Tibial artery (tissue), 4 donors: ENCODE measurements at regions of chr2 and their contacts with region 1.

Region 1: DNA sequence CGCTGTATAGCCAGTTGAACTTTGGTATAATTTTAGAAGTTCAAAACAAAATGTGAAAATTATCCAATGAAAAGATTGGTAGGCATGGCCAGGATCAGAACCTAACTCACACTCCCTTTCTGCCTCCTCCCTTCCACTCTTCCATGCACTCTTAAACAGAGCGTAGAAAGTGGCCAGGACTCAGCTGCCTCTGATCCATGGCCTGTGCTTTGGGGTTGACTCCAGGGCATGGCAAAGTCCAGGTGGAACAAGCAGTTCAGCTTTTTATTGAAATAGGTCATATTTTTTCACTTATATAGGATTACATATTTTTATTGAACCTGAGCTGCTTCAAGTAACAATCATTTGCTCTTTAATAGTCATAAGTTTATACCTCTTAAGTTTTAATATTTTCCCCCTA is 26.2 kb downstream of the INPP1 start:
- DNase-seq: no peak
- H3K4me3 ChIP-seq: no peak overlapping the region
- H3K27ac ChIP-seq: no peak overlapping the region
- H3K4me1 ChIP-seq: peaks cover 0 to 5% (median 0%) of the 10 kb centered on the region in 4 donors
- H3K27me3 ChIP-seq: no peaks in the 10 kb centered on the region
- CTCF ChIP-seq: no peak

Region 2: GRCh38 chr2:190088917-190089316 is 280.7 kb before region 1 on chr2:
- intact Hi-C with region 1: loop called (anchors 5 kb)
- DNase-seq: no peak
- H3K4me3 ChIP-seq: no peak overlapping the region
- H3K27ac ChIP-seq: no peak overlapping the region
- H3K4me1 ChIP-seq: no peaks in the 10 kb centered on the region
- H3K27me3 ChIP-seq: no peaks in the 10 kb centered on the region
- CTCF ChIP-seq: peak; percentile 49 to 59